Motor neuron (in vitro differentiated cells): ENCODE measurements at regions of chr7 and their contacts with region 1.

Region 1: GRCh38 chr7:150420987-150421674 is 29.3 kb upstream of the GIMAP8 start:
- ATAC-seq: peak; percentile 94 to 100 (median 100)
- H3K4me3 ChIP-seq: no peak overlapping the region
- H3K27ac ChIP-seq: no peak overlapping the region
- H3K4me1 ChIP-seq: peaks cover under 1 to 2% of the 10 kb centered on the region in 2 donors

Region 2: GRCh38 chr7:149843566-149843965 is 577.6 kb before region 1 on chr7:
- in situ Hi-C with region 1: no loop called
- ATAC-seq: no peak
- H3K4me3 ChIP-seq: no peak overlapping the region
- H3K27ac ChIP-seq: no peak overlapping the region
- H3K4me1 ChIP-seq: peaks cover 5 to 8% of the 10 kb centered on the region in 2 donors

Region 3: DNA sequence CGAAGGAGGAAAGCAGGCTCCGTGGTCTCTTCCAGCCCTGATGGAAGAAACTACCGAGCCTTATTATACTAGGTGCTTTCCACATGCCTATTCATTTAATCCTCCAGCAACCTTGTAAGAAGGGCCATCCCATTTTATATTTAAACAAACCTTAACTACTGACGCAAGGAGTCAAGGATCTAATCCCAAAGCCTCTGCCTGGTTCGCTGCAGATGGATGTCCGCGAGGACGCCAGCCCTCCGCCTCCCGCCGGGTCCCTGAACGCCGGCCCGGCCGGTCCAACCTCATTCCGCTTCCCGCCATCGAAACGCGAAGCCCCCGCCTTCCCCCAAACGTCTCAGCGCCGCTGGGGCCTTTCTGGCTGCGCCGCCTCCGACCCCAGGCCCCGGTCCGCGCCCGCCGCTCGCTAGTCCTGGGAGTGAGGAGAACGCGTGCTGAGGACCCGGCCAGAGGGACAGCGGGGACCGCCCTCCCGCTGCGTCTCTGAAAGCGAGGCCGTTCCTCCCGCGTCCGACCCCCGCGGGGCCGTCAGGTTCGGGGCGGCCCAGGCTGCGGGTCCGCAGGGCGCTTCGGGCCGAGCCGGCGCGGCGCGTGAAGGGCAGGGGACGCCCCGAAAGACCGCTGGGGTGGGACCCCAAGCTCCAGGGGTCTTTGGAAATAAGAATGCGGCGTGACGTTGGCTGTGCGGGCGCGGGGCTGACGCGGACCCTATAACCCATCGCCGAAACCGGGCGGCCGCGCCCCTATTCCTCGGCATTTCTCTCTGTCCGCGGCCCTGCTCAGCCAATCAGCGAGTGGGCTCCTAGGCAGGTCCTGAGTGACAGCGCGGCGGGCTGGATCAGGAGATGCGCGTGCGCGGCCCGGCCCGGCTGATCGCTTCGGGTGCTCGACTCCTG is 547.8 kb before region 1 on chr7 and contains the start of gene ATP6V0E2:
- in situ Hi-C with region 1: loop called in 1 of 9 experiments (anchors 25 kb)
- ATAC-seq: peak; percentile 78 to 92 (median 90)
- H3K4me3 ChIP-seq: peak within 1 kb of the TSS; percentile 71 to 89 (median 77)
- H3K27ac ChIP-seq: peak within 1 kb of the TSS; percentile 94
- H3K4me1 ChIP-seq: peaks cover 19 to 23% of the 10 kb centered on the region in 2 donors
- total RNA-seq, gene ATP6V0E2: 9.4 to 114 (median 74.4) TPM

Region 4: GRCh38 chr7:150003304-150003810 is 417.8 kb before region 1 on chr7:
- in situ Hi-C with region 1: no loop called
- ATAC-seq: no peak
- H3K4me3 ChIP-seq: no peak overlapping the region
- H3K27ac ChIP-seq: no peak overlapping the region
- H3K4me1 ChIP-seq: no peaks in the 10 kb centered on the region

Region 5: DNA sequence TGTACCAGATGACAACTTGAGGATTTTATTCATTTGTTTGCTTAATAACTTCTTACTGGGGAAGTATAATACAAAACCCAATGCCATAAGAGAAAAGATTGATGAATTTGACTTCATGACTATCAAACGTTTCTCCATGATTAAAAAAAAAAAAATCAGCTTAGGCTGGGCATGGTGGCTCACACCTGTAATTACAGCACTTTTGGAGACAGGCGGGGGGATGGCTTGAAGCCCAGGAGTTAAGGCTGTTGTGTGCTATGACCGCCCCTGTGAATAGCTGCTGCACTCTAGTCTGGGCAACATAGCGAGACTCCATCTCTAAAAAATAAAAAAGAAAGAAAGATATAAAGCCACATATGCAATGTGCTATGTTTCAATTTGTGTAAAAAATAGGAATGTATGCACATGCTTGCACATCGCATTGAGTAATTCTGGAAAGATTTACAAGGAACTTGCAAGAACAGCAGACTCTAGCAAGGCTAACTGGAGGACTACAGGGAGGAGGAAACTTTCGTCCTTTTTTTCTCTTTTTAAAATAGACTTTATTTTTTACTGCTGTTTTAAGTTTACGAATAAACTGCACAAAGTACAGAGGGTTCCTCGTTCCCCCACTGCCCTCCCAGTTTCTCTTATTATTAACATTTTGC is 69.5 kb before region 1 on chr7:
- in situ Hi-C with region 1: no loop called
- ATAC-seq: peak in 3 of 8 experiments; percentile 24 to 90 (median 77)
- H3K4me3 ChIP-seq: no peak overlapping the region
- H3K27ac ChIP-seq: no peak overlapping the region
- H3K4me1 ChIP-seq: no peaks in the 10 kb centered on the region

Region 6: DNA sequence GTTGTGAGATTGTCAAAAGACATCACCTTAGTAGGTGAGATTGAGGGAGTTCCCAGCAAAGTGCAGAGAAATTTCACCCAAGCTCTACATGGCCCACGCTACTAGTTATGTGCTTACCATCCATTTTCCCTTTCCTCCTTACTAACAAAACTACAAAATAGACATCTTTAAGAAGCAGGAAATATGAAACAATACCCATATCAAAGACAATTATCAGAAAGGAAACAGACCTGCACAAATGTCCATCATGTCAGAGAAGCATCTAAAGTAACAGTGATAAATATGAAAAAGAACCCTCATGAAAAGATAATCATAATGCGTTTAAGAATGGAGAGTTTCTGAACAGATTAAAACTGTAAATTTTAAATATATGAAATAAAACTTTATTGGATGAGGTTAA is 174.2 kb after region 1 on chr7:
- in situ Hi-C with region 1: no loop called
- ATAC-seq: no peak
- H3K4me3 ChIP-seq: no peak overlapping the region
- H3K27ac ChIP-seq: no peak overlapping the region
- H3K4me1 ChIP-seq: no peaks in the 10 kb centered on the region

Region 7: GRCh38 chr7:150974468-150975391 is 553.6 kb after region 1 on chr7:
- in situ Hi-C with region 1: loop called in 1 of 9 experiments (anchors 25 kb)
- ATAC-seq: peak; percentile 5 to 43 (median 22)
- H3K4me3 ChIP-seq: peak overlapping the region; percentile 26 to 99 (median 27)
- H3K27ac ChIP-seq: peak overlapping the region; percentile 50 to 76
- H3K4me1 ChIP-seq: peaks cover 55 to 57% of the 10 kb centered on the region in 2 donors